ENCODE measurements at regions of chr7 and their contacts with region 1.

Region 1: GRCh38 chr7:122528879-122529481 is 169.9 kb downstream of the RNF133 start:
- DNase-seq: no peak
- ATAC-seq: no peak
- H3K4me3 Mint-ChIP-seq: no peak overlapping the region
- H3K27ac Mint-ChIP-seq: no peak overlapping the region
- H3K4me1 Mint-ChIP-seq: no peaks in the 10 kb centered on the region
- H3K27me3 Mint-ChIP-seq: peaks cover 4% of the 10 kb centered on the region
- CTCF ChIP-seq: peak; percentile 46

Region 2: GRCh38 chr7:122219253-122219865 is 309.6 kb before region 1 on chr7:
- CTCF ChIA-PET with region 1: no interaction called
- POLR2A ChIA-PET with region 1: no interaction called
- intact Hi-C with region 1: loop called (anchors 2 kb)
- DNase-seq: no peak
- ATAC-seq: no peak
- H3K4me3 Mint-ChIP-seq: no peak overlapping the region
- H3K27ac Mint-ChIP-seq: no peak overlapping the region
- H3K4me1 Mint-ChIP-seq: no peaks in the 10 kb centered on the region
- H3K27me3 Mint-ChIP-seq: peaks cover 3% of the 10 kb centered on the region
- CTCF ChIP-seq: no peak

Region 3: DNA sequence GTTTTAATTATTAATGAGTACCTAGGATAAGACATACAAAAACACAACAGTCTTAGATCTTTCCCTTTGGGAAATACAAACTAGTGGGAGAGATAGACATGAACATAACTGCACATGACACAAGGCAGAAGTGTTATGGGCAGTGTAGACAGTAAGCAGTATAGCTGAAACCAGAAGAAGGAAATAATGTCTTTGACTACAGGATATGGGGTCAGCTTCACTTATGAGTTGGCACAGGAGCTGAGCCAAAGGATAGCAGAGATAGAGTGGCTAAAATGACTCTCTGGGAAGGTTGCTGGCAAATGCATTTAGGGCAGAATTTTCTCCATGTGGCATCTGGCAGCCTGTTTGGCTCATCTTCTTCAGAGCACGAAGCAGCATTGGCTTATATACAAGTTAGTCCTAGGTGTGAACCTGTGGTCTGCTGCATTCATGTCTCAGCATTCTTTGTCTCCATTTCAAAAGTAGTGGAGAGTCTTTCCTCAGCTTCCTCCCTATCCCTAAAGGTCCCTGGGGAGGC is 164.2 kb before region 1 on chr7:
- CTCF ChIA-PET with region 1: no interaction called
- POLR2A ChIA-PET with region 1: no interaction called
- intact Hi-C with region 1: no loop called
- DNase-seq: no peak
- ATAC-seq: no peak
- H3K4me3 Mint-ChIP-seq: no peak overlapping the region
- H3K27ac Mint-ChIP-seq: no peak overlapping the region
- H3K4me1 Mint-ChIP-seq: no peaks in the 10 kb centered on the region
- H3K27me3 Mint-ChIP-seq: no peaks in the 10 kb centered on the region
- CTCF ChIP-seq: no peak